Breast epithelium (tissue), 4 donors: ENCODE measurements at regions of chrX and their contacts with region 1.

Region 1: DNA sequence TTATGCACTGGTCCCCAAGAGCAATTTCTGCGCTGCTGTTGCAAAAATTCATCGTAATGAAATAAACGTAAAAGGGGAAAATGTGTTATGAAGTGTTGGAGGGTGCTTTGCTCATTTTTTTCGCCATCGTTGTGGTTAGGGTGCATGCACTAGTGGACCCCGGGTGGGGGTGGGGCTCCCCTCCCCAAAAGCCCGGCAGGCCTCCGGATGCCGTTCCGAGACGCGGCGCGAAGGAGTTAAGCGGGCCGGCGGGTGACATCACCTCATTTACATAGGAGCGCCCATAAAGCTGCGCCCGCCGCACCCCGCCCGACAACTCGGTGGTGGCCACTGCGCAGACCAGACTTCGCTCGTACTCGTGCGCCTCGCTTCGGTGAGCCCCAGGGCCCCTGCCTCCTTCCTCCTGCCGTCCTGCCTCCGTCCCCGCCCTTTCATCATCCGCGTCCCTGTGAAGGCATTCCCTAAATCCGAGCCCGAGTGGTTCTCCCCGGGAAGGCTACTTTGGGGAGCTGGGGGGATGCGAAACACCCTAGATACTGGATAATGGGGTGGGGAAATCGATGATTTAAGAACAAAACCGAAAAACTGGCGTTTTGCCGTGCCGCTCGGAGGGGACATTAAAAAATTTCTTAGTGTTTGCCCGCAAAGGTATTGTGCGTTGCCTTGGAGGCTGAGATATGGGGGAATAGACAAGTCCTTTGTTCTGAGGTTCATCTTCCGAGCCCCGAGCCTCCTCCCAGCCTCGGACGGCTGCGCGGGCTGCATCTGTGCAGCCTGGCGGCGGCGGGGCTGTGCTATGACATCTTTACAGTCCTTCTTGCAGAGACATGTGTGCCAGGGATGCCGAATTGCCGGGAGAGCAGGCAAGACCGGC is at the start of gene TMSB4X:
- DNase-seq: peak; percentile 73 to 87
- H3K4me3 ChIP-seq: peak within 1 kb of the TSS; percentile 67 to 78 (median 72)
- H3K27ac ChIP-seq: peak within 1 kb of the TSS; percentile 92 to 96
- H3K4me1 ChIP-seq: no peaks in the 10 kb centered on the region
- H3K27me3 ChIP-seq: peaks cover 6 to 38% of the 10 kb centered on the region in 2 donors
- CTCF ChIP-seq: no peak
- POLR2A ChIP-seq: peak; percentile 95
- total RNA-seq, gene TMSB4X: 1,496 to 5,389 (median 3,453) TPM

Region 2: GRCh38 chrX:12480956-12481355 is 494.1 kb before region 1 on chrX:
- intact Hi-C with region 1: no loop called
- DNase-seq: no peak
- H3K4me3 ChIP-seq: no peak overlapping the region
- H3K27ac ChIP-seq: no peak overlapping the region
- H3K4me1 ChIP-seq: no peaks in the 10 kb centered on the region
- H3K27me3 ChIP-seq: no peaks in the 10 kb centered on the region
- CTCF ChIP-seq: no peak
- POLR2A ChIP-seq: no peak

Region 3: DNA sequence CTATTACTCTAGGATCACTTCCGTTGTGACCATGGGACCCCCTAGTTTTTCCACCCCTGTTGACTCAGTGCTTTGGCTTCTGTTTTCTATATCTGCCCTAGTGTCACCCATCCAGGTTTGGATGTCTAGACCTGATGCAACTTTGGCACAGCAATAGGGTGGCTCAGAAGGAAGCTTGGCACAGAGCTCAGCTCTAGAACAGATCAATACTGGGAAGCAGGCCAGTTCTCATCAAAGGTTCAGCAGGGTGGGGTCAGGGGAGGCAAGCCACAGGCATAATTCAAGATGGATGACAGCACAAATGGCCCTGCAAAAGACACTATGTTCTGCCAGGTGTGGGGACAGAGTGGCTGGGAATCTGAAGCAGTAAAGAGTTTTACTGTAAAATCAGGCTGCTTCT is 520.2 kb after region 1 on chrX:
- intact Hi-C with region 1: loop called (anchors 10 kb)
- DNase-seq: no peak
- H3K4me3 ChIP-seq: no peak overlapping the region
- H3K27ac ChIP-seq: no peak overlapping the region
- H3K4me1 ChIP-seq: no peaks in the 10 kb centered on the region
- H3K27me3 ChIP-seq: peaks cover 0 to 41% of the 10 kb centered on the region in 2 donors
- CTCF ChIP-seq: no peak
- POLR2A ChIP-seq: no peak